Activated T-helper 2 cell treated with anti-CD3 and anti-CD28 coated beads, Interferon-gamma antibody, Interleukin-2, Interleukin-4, amounts not matched to agents 10 μg/mL and 5 μg/mL and 100 μg/mL, durations not matched to agents 14 hours and 24 hours and 36 hours (primary cell): ENCODE measurements at regions of chr1 and their contacts with region 1.

Region 1: DNA sequence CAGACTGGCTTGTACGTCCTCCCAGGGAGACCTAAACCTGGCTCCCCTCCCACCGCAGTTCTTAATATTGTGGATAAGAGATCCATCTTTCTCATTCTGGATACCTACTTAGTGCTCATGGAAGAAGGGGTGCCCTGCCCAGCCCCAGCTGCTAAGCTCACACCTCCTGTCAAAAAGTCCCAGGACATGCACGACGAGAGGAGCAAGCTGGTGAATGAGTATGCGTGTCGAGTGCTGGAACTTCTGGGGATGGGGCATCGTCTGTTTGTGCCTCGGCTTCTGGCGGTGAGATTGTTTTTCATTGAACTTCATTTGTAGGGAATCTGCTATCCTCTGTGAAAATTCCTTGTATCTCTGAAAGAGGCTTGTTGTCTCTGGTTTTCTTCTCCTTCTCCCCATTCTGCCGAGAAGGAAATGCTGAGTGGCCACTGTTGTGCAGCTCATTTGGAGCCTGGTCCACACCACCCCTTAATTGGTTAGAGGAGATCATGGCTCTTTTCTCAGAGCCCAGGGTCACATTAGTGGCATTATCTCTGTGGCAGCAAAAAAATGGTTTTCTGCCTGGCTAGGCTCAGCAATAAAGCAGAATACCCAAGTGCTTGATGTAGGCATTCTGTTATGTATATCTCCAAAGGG is 199.4 kb upstream of the CACYBP start:
- DNase-seq: peak; percentile 14
- H3K4me3 Mint-ChIP-seq: no peak overlapping the region
- H3K27ac Mint-ChIP-seq: no peak overlapping the region
- H3K4me1 Mint-ChIP-seq: peaks cover 2% of the 10 kb centered on the region
- H3K27me3 Mint-ChIP-seq: no peaks in the 10 kb centered on the region

Region 2: DNA sequence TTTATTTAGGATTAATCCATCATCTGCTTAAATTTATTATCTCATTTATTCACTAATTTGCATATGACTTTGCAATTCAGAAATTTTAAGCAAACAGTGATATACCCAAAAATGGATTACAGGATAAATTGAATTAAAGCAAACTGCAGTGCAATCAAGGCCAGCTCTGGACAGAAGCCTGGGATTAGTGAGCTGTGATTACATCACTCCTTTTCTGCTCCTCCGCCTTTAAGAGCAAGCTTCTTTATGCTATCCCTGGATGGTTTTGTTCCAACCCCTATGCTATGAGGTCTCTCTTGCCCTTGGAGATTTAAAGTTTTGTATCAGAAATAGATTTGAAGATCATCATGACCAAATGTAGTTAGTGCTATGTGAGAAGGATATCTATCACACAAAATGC is 320.0 kb before region 1 on chr1:
- intact Hi-C with region 1: no loop called
- DNase-seq: no peak
- H3K4me3 Mint-ChIP-seq: no peak overlapping the region
- H3K27ac Mint-ChIP-seq: no peak overlapping the region
- H3K4me1 Mint-ChIP-seq: no peaks in the 10 kb centered on the region
- H3K27me3 Mint-ChIP-seq: no peaks in the 10 kb centered on the region

Region 3: DNA sequence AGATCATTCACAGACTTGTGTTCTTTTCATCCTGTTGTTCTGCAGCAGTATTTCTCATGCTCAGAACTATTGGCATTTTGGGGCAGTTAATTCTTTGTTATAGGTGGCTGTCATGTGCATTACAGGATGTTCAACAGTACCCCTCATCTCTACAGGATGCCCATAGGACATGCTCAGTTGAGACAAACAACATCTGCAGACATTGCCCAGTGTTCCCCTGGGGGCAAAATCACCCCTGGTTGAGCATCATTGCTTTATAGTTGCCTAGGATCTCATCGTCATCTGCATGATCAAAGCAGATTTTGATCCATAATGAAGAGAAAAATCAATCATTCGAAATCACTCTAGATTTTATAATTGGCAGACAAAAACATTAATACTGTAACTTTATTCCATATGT is 23.1 kb before region 1 on chr1:
- intact Hi-C with region 1: no loop called
- DNase-seq: no peak
- H3K4me3 Mint-ChIP-seq: no peak overlapping the region
- H3K27ac Mint-ChIP-seq: no peak overlapping the region
- H3K4me1 Mint-ChIP-seq: peaks cover 4% of the 10 kb centered on the region
- H3K27me3 Mint-ChIP-seq: no peaks in the 10 kb centered on the region

Region 4: DNA sequence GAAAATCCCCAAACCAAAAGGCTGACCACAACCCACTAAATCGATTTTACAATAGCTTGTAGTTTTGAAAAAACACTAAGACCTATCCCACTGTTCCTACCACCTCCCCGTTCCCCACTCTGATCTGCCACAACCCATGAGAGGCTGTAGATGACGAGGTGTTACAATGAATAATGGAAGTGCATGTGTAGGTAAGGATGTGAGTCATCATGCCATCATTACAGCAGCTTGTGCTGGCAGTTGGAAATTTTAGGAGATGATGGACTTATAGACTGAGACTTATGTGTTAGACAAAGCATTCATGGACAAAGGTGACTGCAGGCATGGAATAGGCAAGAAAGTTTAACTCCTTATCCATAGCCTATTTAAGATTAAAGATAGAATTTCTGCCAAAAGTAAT is 14.7 kb after region 1 on chr1:
- intact Hi-C with region 1: loop called (anchors 2 kb)
- DNase-seq: no peak
- H3K4me3 Mint-ChIP-seq: no peak overlapping the region
- H3K27ac Mint-ChIP-seq: no peak overlapping the region
- H3K4me1 Mint-ChIP-seq: peaks cover 25% of the 10 kb centered on the region
- H3K27me3 Mint-ChIP-seq: no peaks in the 10 kb centered on the region

Region 5: GRCh38 chr1:174912264-174912663 is 111.9 kb after region 1 on chr1:
- intact Hi-C with region 1: loop called (anchors 1 kb)
- DNase-seq: no peak
- H3K4me3 Mint-ChIP-seq: no peak overlapping the region
- H3K27ac Mint-ChIP-seq: peak overlapping the region; percentile 28
- H3K4me1 Mint-ChIP-seq: peaks cover 46% of the 10 kb centered on the region
- H3K27me3 Mint-ChIP-seq: no peaks in the 10 kb centered on the region

Region 6: GRCh38 chr1:174999216-174999925 is 199.0 kb after region 1 on chr1:
- intact Hi-C with region 1: loop called (anchors 1 kb)
- DNase-seq: peak; percentile 96
- H3K4me3 Mint-ChIP-seq: no peak overlapping the region
- H3K27ac Mint-ChIP-seq: no peak overlapping the region
- H3K4me1 Mint-ChIP-seq: peaks cover 38% of the 10 kb centered on the region
- H3K27me3 Mint-ChIP-seq: no peaks in the 10 kb centered on the region